AG04450 (cell line): ENCODE measurements at regions of chr20 and their contacts with region 1.

Region 1: DNA sequence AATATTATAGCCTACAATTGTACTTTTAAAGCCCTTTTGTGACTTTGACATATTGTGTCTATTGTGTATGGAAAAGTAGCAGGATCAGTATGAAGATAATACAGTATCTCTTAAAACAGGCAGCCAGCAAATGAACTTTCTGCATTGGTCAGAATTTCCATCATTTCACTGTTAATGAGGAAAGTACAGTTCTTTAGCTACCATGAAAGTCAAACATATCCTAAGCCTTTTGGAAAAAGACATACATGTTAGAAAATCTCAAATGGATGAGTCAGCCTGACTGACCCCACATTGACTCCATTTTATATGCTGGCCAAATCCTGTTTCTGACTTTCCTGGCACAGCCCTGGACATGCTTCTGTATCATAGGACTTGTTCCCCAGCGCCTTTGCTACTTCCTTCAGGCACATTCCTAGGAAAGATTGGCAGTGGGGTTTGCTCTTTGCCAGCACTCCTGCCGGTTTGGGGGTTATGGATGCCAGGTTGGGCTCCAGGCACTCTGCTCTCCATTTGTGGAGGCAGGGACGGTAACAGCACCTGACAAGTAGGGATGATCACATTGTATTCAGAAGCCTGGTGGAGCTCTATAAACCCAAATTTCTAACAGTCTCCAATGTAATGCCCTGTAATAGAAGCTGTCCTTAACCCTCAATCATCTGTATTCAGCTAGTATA is 43.7 kb downstream of the TOP1 start:
- DNase-seq: no peak
- H3K4me3 ChIP-seq: no peak overlapping the region
- H3K27ac ChIP-seq: peak overlapping the region; percentile 68
- H3K27me3 ChIP-seq: no peaks in the 10 kb centered on the region
- CTCF ChIP-seq: no peak

Region 2: GRCh38 chr20:40970201-40970600 is 102.1 kb before region 1 on chr20:
- CTCF ChIA-PET with region 1: interaction called, 11 read pairs
- POLR2A ChIA-PET with region 1: no interaction called
- DNase-seq: no peak
- H3K4me3 ChIP-seq: no peak overlapping the region
- H3K27ac ChIP-seq: no peak overlapping the region
- H3K27me3 ChIP-seq: no peaks in the 10 kb centered on the region
- CTCF ChIP-seq: peak; percentile 28; the same call in 1 of the 2 replicates